HCT116 (cell line): ENCODE measurements at regions of chr18 and their contacts with region 1.

Region 1: GRCh38 chr18:47323158-47323557 is 71.7 kb upstream of the SKOR2 start:
- DNase-seq: no peak
- ATAC-seq: no peak
- H3K4me3 ChIP-seq: no peak overlapping the region
- H3K27ac ChIP-seq: no peak overlapping the region
- H3K4me1 ChIP-seq: peaks cover 0 to 4% of the 10 kb centered on the region in 2 experiments; a peak in 1 of 4 replicates
- H3K27me3 ChIP-seq: peaks cover 25% of the 10 kb centered on the region
- CTCF ChIP-seq: no peak
- POLR2A ChIP-seq: no peak
- RAD21 ChIP-seq: no peak

Region 2: DNA sequence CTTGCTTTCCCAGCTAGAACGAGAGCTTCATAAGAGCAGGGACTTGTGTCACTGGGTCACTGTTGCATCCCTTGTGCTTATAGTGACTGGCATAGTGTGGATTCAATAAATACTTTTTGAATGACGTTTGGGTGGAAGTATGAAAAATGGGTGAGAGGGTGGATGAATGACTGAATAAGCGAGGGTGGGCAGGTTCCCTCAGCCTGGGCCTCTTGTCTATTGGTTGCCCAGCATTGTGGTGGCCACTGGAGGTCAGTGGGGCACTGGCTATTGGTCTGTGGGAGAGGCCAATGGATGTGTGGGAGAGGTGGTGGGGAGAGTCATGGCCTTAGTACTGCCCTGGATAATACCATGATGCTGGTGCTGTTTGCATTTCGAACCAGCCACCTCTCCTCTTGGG is 22.1 kb after region 1 on chr18:
- CTCF ChIA-PET with region 1: no interaction called
- POLR2A ChIA-PET with region 1: no interaction called
- RAD21 ChIA-PET with region 1: no interaction called
- intact Hi-C with region 1: loop called (anchors 2 kb)
- DNase-seq: no peak
- ATAC-seq: no peak
- H3K4me3 ChIP-seq: no peak overlapping the region
- H3K27ac ChIP-seq: no peak overlapping the region
- H3K4me1 ChIP-seq: no peaks in the 10 kb centered on the region
- H3K27me3 ChIP-seq: peaks cover 39% of the 10 kb centered on the region
- CTCF ChIP-seq: no peak
- POLR2A ChIP-seq: no peak
- RAD21 ChIP-seq: no peak

Region 3: DNA sequence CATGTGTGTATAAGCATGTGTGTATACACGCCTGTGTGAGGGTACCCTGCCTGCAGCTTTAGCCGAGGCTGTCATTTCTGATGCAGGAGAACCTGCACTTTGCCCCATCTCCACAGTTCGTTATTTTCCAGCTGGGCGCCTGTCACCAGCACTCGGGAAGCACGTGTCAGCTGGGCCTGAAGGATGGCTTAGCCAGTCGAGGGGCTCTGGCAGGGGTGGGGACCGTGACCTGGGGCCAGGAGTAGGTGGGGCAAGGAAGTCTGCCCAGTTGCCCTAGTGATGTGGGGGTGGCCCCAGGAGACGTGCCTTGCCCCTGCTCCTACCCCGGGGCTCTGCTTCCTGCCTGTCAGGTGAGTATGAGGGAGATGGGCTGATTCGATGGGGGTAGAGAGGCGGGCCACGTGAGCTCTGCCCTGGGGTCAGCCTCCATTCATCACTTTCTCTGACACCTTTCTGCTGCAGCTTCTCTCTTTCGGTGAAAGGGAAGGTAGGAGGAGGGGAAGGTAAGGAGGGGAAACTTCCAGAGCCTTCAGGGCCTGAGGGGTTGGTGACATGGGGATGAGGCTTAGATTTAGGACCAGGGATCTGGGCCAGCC is 58.9 kb after region 1 on chr18:
- CTCF ChIA-PET with region 1: no interaction called
- POLR2A ChIA-PET with region 1: no interaction called
- RAD21 ChIA-PET with region 1: no interaction called
- intact Hi-C with region 1: no loop called
- DNase-seq: no peak
- ATAC-seq: no peak
- H3K4me3 ChIP-seq: no peak overlapping the region
- H3K27ac ChIP-seq: no peak overlapping the region
- H3K4me1 ChIP-seq: no peaks in the 10 kb centered on the region
- H3K27me3 ChIP-seq: peaks cover 41% of the 10 kb centered on the region
- CTCF ChIP-seq: no peak
- POLR2A ChIP-seq: no peak
- RAD21 ChIP-seq: no peak

Region 4: DNA sequence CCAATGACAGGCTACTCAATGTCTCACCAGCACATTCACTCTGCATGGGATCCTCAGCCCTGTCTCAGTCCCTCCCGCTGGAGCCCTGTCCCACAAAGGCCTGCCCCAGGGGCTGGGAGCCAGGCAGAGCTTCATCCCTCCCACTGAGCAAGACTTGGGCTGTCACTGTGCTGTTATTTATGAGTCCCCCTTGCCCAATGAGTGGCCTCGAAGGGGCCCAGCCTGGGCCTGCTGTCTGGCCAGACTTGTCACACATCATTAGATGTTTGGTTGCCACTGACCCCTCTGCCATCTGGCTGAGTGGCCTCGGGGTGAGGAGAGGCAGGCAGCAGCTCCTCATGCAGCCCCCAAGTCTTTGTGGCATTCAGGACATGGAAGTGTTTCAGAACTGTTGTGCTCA is 258.9 kb after region 1 on chr18:
- CTCF ChIA-PET with region 1: no interaction called
- POLR2A ChIA-PET with region 1: no interaction called
- RAD21 ChIA-PET with region 1: no interaction called
- intact Hi-C with region 1: no loop called
- DNase-seq: no peak
- ATAC-seq: no peak
- H3K4me3 ChIP-seq: no peak overlapping the region
- H3K27ac ChIP-seq: no peak overlapping the region
- H3K4me1 ChIP-seq: no peaks in the 10 kb centered on the region
- H3K27me3 ChIP-seq: peaks cover 23% of the 10 kb centered on the region
- CTCF ChIP-seq: no peak
- POLR2A ChIP-seq: no peak
- RAD21 ChIP-seq: no peak